ENCODE measurements at regions of chr17 and their contacts with region 1.

Region 1: GRCh38 chr17:2828397-2829038 is 32.3 kb downstream of the RAP1GAP2 start:
- DNase-seq: peak; percentile 72 to 90 (median 89)
- ATAC-seq: peak; percentile 73 to 90
- H3K4me3 ChIP-seq: no peak overlapping the region
- H3K27ac ChIP-seq: no peak overlapping the region
- H3K4me1 ChIP-seq: no peaks in the 10 kb centered on the region
- H3K27me3 ChIP-seq: no peaks in the 10 kb centered on the region

Region 2: DNA sequence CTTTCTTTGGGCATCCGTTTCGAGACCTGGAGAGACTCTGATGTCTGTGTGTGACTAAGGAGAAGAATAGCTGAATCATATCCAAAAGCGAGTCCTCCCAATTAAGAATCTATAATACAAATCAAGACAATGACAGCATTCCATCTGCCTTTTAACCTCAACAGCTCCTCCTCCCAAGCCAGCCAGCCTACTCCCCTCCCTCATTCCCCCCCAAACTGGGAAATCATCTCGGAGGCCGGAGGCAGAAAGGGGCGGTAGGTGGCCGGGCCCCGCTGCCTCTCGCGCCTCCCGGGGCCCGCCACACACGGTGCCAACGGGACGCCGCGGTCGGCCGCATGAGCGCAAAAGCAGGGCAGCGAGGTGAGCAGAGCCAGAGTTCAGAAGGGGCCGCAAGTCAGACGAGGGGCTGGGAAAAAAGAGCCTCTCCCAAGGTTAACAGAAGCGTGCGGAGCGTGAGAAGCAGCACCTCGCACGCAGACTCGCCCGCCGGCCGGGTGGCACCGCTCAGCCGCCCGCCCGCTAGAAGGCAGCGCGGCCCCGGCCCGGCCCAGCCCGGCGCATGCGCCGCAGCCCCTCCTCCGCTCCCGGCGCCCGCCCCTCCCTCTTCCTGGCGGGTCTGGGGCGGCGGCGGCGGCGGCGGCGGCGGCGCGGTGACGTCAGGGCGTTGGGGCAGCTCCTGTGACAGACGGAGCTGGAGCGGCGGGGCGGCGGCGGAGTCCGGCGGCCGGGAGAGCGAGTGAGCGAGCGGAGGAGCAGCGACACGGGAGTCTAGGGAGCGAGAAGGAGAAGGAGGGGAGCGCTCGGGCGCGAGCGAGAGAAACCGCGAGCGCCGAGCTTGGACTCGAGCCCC is 235.3 kb before region 1 on chr17 and contains the start of gene PAFAH1B1:
- intact Hi-C with region 1: no loop called
- DNase-seq: peak; percentile 93 to 98 (median 97)
- ATAC-seq: peak; percentile 94 to 95
- H3K4me3 ChIP-seq: peak within 1 kb of the TSS; percentile 98
- H3K27ac ChIP-seq: peak within 1 kb of the TSS; percentile 87
- H3K4me1 ChIP-seq: no peaks in the 10 kb centered on the region
- H3K27me3 ChIP-seq: no peaks in the 10 kb centered on the region
- total RNA-seq, gene PAFAH1B1: 104 to 128 (median 106) TPM

Region 3: GRCh38 chr17:2758870-2759269 is 69.6 kb before region 1 on chr17:
- intact Hi-C with region 1: no loop called
- DNase-seq: no peak
- ATAC-seq: no peak
- H3K4me3 ChIP-seq: no peak overlapping the region
- H3K27ac ChIP-seq: no peak overlapping the region
- H3K4me1 ChIP-seq: no peaks in the 10 kb centered on the region
- H3K27me3 ChIP-seq: no peaks in the 10 kb centered on the region

Region 4: DNA sequence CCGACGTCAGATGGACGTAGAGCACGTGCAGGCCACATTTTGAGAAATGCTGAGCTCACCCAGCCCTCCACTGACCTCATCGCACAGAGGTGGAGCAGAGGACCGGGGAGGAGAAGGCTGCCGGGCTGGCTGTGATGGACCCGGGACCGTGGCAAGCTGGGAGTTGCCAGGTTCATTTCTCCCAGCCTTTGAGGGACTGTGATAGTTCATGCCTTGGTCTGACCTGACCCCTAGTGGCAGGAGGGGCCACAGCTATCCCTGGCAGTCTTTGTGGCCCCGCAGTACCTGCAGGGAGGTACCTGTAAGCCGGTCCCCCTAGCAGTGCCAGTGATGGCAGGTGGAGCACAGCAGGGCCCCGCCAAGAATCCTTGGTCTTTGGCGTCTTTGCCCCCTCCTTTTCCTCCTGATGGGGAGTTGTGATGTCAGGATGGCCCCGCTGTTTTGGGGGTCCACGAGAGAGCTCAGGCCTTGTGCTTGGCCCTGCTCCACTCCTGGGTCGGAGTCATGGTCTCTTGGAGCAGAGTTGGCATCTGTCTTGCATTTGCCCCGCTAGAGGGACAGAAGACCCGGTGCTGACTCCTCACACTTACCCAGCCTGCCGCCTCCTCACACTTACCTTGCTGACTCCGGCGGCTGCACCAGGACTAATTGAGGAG is 184.5 kb after region 1 on chr17:
- intact Hi-C with region 1: loop called (anchors 2 to 5 kb)
- DNase-seq: peak; percentile 66 to 85 (median 78)
- ATAC-seq: peak; percentile 87 to 92
- H3K4me3 ChIP-seq: no peak overlapping the region
- H3K27ac ChIP-seq: no peak overlapping the region
- H3K4me1 ChIP-seq: no peaks in the 10 kb centered on the region
- H3K27me3 ChIP-seq: no peaks in the 10 kb centered on the region

Region 5: DNA sequence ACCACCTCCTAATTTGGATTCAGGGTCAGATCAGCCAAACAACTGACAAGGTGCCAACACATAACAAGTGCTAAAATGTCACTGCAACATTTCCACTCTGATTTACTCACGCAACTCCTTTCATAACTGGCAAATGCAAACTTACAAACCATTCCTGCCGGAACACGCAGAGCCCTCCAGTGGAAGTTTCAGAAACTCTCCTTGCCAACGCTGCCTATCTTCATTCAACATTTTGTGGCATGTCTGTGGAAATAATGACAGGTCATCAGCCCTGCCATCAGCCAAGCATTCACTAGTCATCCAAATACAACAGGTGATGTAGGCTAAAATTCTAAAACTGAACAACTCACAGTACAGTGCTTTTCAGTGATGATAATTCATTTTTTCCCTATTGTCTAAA is 507.4 kb after region 1 on chr17:
- intact Hi-C with region 1: loop called in 1 of 4 experiments (anchors 10 kb)
- DNase-seq: no peak
- ATAC-seq: no peak
- H3K4me3 ChIP-seq: no peak overlapping the region
- H3K27ac ChIP-seq: no peak overlapping the region
- H3K4me1 ChIP-seq: peaks cover 2% of the 10 kb centered on the region
- H3K27me3 ChIP-seq: no peaks in the 10 kb centered on the region

Measured in right cardiac atrium (tissue), 5 donors.